Activated CD4-positive, alpha-beta memory T cell treated with anti-CD3 and anti-CD28 coated beads, Interleukin-2, amount 10 ng/mL, durations not matched to agents 7 days and 5 days (primary cell): ENCODE measurements at regions of chr20 and their contacts with region 1.

Region 1: DNA sequence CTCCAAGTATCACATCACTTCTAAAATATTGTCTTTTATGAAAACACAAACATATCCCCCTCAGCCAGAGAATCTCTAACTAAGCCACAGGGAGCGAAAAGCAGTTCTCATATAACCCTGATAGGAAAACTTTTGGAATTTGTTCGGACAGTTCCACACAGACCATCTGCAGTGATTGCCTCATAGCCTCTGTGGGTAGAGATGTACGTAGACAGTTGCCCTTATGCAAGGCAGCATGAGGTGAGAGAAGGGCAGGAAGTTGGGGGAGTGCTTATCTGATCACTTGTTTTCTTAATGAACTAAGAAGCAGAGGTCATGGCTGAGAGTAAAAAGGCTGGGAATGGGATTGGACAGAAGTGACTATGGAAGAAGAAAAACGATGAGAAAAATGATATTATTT is 39.6 kb downstream of the SLC23A2 start:
- DNase-seq: peak; percentile 43
- H3K4me3 Mint-ChIP-seq: peak overlapping the region; percentile 45
- H3K27ac Mint-ChIP-seq: peak overlapping the region; percentile 94
- H3K4me1 Mint-ChIP-seq: peaks cover 25% of the 10 kb centered on the region
- H3K27me3 Mint-ChIP-seq: no peaks in the 10 kb centered on the region

Region 2: DNA sequence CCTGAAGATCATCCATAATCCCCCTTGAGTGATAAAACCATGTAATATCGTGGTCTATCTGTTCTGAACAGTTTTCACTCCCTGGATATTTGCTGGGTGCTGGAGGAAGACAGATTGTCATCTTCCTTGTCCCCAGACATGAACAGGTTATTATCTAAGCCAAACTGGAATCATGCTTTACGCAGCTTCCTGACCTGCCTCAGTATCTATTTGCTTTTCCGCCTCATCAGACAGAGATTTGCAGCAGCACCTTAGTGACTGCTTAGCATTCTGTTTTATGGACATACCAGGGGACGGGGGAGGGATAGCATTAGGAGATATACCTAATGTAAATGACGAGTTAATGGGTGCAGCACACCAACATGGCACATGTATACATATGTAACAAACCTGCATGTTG is 85.0 kb before region 1 on chr20:
- CTCF ChIA-PET with region 1: no interaction called
- POLR2A ChIA-PET with region 1: no interaction called
- DNase-seq: no peak
- H3K4me3 Mint-ChIP-seq: no peak overlapping the region
- H3K27ac Mint-ChIP-seq: no peak overlapping the region
- H3K4me1 Mint-ChIP-seq: peaks cover 15% of the 10 kb centered on the region
- H3K27me3 Mint-ChIP-seq: no peaks in the 10 kb centered on the region

Region 3: DNA sequence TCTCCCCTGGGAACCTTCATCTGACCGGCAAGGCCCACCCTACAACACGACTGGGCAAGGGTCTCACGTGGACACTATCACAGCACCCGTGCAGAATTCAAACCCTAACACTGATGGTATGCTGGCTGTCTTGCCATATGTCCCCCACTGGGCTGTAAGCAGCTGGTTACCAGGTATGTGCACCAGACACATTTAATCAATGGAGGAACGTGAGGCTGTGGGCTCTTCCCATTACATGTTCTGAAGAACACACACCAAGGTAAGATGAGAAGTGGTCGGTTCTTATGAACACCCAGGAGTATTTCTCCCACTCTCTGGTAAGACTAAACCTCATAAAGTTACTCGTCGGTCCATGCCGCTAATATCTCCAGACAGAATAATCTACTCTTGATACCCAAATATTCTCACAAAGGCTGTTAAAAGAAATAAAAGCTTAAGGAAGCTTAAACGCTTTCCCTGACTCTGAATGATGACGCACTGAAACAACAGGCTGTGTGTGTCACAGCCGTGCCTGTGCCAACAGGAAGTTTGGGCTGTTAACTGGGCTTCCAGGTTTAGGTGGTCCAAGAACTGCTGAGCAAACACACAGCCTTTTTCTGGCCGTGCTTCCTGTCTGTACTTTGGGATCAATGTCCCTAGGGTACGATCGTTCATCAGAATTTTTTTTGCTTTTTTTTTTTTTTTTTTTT is 35.8 kb before region 1 on chr20:
- CTCF ChIA-PET with region 1: no interaction called
- POLR2A ChIA-PET with region 1: no interaction called
- DNase-seq: no peak
- H3K4me3 Mint-ChIP-seq: no peak overlapping the region
- H3K27ac Mint-ChIP-seq: no peak overlapping the region
- H3K4me1 Mint-ChIP-seq: peaks cover 16% of the 10 kb centered on the region
- H3K27me3 Mint-ChIP-seq: no peaks in the 10 kb centered on the region

Region 4: DNA sequence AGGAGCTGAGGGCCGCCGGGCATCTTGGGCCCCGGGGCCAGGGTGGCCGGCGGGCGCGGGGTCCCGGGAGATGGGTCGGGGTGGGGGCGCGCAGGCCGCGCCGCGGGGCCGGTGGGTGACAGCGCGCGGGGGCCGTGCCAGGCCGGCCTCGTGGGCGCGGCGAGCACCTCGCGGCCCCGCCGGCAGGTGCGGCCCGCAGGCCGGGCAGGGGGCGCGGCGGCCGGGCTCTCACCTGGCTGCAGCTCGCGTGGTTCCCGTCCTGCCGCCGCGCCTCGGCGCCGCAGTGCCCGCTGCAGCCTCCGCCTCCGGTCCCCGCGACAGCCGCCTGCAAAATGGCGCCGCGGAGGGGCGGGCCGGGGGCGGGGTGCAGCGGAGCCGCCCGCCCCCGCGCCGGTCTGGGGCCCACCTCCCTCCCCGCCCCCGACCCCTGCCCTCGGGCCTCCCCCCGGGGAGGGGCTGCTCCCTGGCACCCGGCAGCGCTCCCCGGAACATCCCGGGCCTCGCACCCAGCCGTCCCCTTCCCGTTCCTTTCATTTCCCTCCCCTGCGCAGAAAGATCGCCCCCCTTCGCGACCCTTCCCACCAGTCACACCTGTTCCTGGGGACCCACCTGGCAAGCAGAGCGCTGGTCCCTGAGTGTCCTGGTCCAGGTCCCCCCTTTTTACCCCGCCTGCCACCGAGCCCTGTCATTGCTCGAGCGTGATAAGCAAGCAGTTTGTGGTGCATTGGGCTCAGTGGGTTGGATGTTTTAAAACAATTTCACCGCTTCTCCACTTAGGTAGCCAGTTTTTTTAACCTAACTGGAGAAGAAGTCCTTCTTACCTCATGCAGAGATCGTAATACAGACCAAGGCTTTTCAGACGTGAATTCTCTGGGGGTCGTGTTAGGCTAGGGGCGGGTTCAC is 39.7 kb after region 1 on chr20 and contains the start of gene SLC23A2:
- CTCF ChIA-PET with region 1: interaction called, 4 read pairs
- POLR2A ChIA-PET with region 1: interaction called, 10 read pairs
- DNase-seq: peak; percentile 64
- H3K4me3 Mint-ChIP-seq: peak within 1 kb of the TSS; percentile 93
- H3K27ac Mint-ChIP-seq: peak within 1 kb of the TSS; percentile 76
- H3K4me1 Mint-ChIP-seq: peaks cover 26% of the 10 kb centered on the region
- H3K27me3 Mint-ChIP-seq: peaks cover 12% of the 10 kb centered on the region
- total RNA-seq, gene SLC23A2: 12.9 to 14.1 TPM

Region 5: GRCh38 chr20:5072756-5073659 is 111.3 kb after region 1 on chr20:
- CTCF ChIA-PET with region 1: no interaction called
- POLR2A ChIA-PET with region 1: no interaction called
- DNase-seq: no peak
- H3K4me3 Mint-ChIP-seq: no peak overlapping the region
- H3K27ac Mint-ChIP-seq: no peak overlapping the region
- H3K4me1 Mint-ChIP-seq: peaks cover 27% of the 10 kb centered on the region
- H3K27me3 Mint-ChIP-seq: no peaks in the 10 kb centered on the region